ENCODE measurements at regions of chr9 and their contacts with region 1.

Region 1: GRCh38 chr9:109953813-109954497 is 174.0 kb downstream of the PALM2AKAP2 start:
- DNase-seq: peak; percentile 49
- ATAC-seq: peak; percentile 80
- H3K4me3 ChIP-seq: peak overlapping the region in 1 of 5 experiments; percentile 4
- H3K4me3 Mint-ChIP-seq: peak overlapping the region; percentile 59
- H3K27ac ChIP-seq: peak overlapping the region in 1 of 2 donors; percentile 73
- H3K27ac Mint-ChIP-seq: peak overlapping the region; percentile 86
- H3K4me1 ChIP-seq: peaks cover 38 to 42% of the 10 kb centered on the region in 2 donors
- H3K4me1 Mint-ChIP-seq: peaks cover 58% of the 10 kb centered on the region
- H3K27me3 ChIP-seq: no peaks in the 10 kb centered on the region
- H3K27me3 Mint-ChIP-seq: no peaks in the 10 kb centered on the region
- CTCF ChIP-seq: peak; percentile 57

Region 2: DNA sequence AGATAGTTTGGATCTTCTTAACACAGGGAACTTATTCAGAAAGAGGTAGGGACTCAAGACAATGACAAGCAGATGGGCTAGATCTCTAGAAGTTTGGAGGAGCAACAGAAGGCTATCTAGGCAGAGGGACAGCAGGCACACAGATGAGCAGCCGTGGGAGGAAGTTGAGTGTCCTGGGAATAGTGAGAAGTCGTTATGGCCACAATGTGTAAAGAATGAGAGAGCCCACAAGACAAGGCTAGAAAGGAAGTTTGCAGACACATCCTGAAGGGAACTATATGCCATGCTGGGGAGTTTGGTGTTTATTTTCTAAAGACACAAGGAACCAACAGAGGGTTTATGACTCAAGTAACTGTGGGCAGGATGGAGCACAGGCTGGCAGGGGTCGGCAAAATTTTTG is 13.4 kb before region 1 on chr9:
- CTCF ChIA-PET with region 1: interaction called, 6 read pairs
- POLR2A ChIA-PET with region 1: interaction called, 5 read pairs
- intact Hi-C with region 1: loop called (anchors 2 kb)
- DNase-seq: no peak
- ATAC-seq: no peak
- H3K4me3 ChIP-seq: no peak overlapping the region
- H3K4me3 Mint-ChIP-seq: no peak overlapping the region
- H3K27ac ChIP-seq: no peak overlapping the region
- H3K27ac Mint-ChIP-seq: no peak overlapping the region
- H3K4me1 ChIP-seq: peaks cover 13 to 20% of the 10 kb centered on the region in 2 donors
- H3K4me1 Mint-ChIP-seq: peaks cover 16% of the 10 kb centered on the region
- H3K27me3 ChIP-seq: no peaks in the 10 kb centered on the region
- H3K27me3 Mint-ChIP-seq: no peaks in the 10 kb centered on the region
- CTCF ChIP-seq: no peak

Region 3: DNA sequence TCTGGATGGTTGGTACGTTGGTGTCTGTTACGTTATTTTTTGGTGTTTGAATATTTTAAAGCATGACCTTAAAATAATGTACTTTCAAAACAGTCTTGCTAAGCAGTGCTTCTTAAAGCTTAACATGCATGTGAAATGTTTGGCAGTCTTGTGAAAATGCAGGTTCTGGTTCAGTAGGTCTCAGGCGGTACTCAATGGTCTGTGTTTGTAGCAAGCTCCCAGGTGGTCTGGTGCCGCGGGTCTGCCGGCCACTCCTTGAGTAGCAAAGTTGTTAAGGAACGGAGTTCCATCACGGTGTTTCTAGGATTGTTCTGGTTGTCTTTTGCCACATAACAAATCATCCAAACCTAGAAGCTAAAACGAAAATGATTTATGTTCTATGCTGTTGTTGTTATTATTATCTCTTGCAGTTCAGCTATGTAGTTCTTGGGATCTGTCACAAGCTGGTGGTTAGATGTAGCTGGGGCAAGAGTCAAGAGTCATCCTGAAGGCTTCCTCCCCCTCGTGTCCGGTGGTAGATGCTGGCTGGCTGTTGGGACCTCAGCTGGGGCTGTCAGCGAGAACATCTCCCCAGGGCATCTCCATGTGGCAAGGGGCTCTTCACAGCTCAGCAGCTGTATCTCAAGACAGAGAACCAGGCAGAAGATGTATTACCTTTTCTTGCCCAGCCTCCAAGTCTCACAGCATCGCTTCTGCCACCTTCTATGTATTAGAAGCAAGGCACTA is 12.9 kb after region 1 on chr9:
- CTCF ChIA-PET with region 1: interaction called, 31 read pairs
- POLR2A ChIA-PET with region 1: interaction called, 7 read pairs
- intact Hi-C with region 1: loop called (anchors 1 kb)
- DNase-seq: peak; percentile 70
- ATAC-seq: peak; percentile 72
- H3K4me3 ChIP-seq: peak overlapping the region in 3 of 5 experiments; percentile 25 to 35 (median 25)
- H3K4me3 Mint-ChIP-seq: peak overlapping the region; percentile 84
- H3K27ac ChIP-seq: peak overlapping the region; percentile 93 to 95
- H3K27ac Mint-ChIP-seq: peak overlapping the region; percentile 96
- H3K4me1 ChIP-seq: peaks cover 80 to 83% of the 10 kb centered on the region in 2 donors
- H3K4me1 Mint-ChIP-seq: peaks cover 83% of the 10 kb centered on the region
- H3K27me3 ChIP-seq: no peaks in the 10 kb centered on the region
- H3K27me3 Mint-ChIP-seq: no peaks in the 10 kb centered on the region
- CTCF ChIP-seq: no peak

Region 4: GRCh38 chr9:110058304-110058953 is 104.5 kb after region 1 on chr9:
- CTCF ChIA-PET with region 1: interaction called, 10 read pairs
- POLR2A ChIA-PET with region 1: no interaction called
- intact Hi-C with region 1: no loop called
- DNase-seq: peak; percentile 75
- ATAC-seq: peak; percentile 65
- H3K4me3 ChIP-seq: no peak overlapping the region
- H3K4me3 Mint-ChIP-seq: peak overlapping the region; percentile 68
- H3K27ac ChIP-seq: peak overlapping the region in 1 of 2 donors; percentile 45
- H3K27ac Mint-ChIP-seq: peak overlapping the region; percentile 80
- H3K4me1 ChIP-seq: peaks cover 57 to 70% of the 10 kb centered on the region in 2 donors
- H3K4me1 Mint-ChIP-seq: peaks cover 76% of the 10 kb centered on the region
- H3K27me3 ChIP-seq: no peaks in the 10 kb centered on the region
- H3K27me3 Mint-ChIP-seq: no peaks in the 10 kb centered on the region
- CTCF ChIP-seq: peak; percentile 77

Region 5: GRCh38 chr9:110170357-110171257 is 216.7 kb after region 1 on chr9:
- CTCF ChIA-PET with region 1: no interaction called
- POLR2A ChIA-PET with region 1: no interaction called
- intact Hi-C with region 1: no loop called
- DNase-seq: no peak
- ATAC-seq: no peak
- H3K4me3 ChIP-seq: no peak overlapping the region
- H3K4me3 Mint-ChIP-seq: no peak overlapping the region
- H3K27ac ChIP-seq: no peak overlapping the region
- H3K27ac Mint-ChIP-seq: peak overlapping the region; percentile 22
- H3K4me1 ChIP-seq: no peaks in the 10 kb centered on the region
- H3K4me1 Mint-ChIP-seq: peaks cover 31% of the 10 kb centered on the region
- H3K27me3 ChIP-seq: no peaks in the 10 kb centered on the region
- H3K27me3 Mint-ChIP-seq: no peaks in the 10 kb centered on the region
- CTCF ChIP-seq: no peak